MCF 10A (cell line): ENCODE measurements at regions of chr6 and their contacts with region 1.

Region 1: GRCh38 chr6:13538084-13538483 is 36.3 kb upstream of the SIRT5 start:
- DNase-seq: peak; percentile 58
- H3K4me3 Mint-ChIP-seq: no peak overlapping the region
- H3K27ac Mint-ChIP-seq: no peak overlapping the region
- H3K4me1 Mint-ChIP-seq: no peaks in the 10 kb centered on the region
- H3K27me3 Mint-ChIP-seq: no peaks in the 10 kb centered on the region
- CTCF ChIP-seq: peak; percentile 35

Region 2: DNA sequence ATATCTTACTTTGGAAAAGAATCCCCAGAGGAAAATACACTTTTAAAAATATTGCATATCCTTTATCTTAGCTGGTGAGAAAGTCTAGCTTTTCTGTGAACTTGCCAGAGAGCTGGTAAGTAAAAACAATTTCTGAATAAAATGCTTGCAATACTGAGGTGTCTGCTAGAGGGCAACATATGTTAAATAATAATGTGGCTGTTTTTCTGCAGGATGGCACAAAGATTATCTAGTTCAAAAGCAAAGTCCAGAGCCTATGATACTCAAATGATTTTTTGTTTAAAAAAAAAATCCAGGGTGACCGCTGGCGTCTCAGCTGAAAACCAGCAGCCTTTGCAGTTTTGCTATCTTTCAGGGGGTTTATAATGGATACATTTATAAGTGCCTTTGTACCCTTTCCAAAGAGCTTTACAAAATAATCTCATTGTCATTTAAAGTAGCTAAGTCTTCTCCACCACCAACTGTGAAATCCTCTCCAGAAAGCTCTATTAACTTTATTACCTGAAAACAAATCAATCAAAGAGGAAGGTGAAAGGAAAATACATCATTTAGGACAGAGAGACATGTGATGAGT is 626.6 kb before region 1 on chr6:
- CTCF ChIA-PET with region 1: interaction called, 3 read pairs
- POLR2A ChIA-PET with region 1: no interaction called
- intact Hi-C with region 1: loop called (anchors 10 kb)
- DNase-seq: peak; percentile 31
- H3K4me3 Mint-ChIP-seq: no peak overlapping the region
- H3K27ac Mint-ChIP-seq: no peak overlapping the region
- H3K4me1 Mint-ChIP-seq: no peaks in the 10 kb centered on the region
- H3K27me3 Mint-ChIP-seq: peaks cover 62% of the 10 kb centered on the region
- CTCF ChIP-seq: peak; percentile 40

Region 3: DNA sequence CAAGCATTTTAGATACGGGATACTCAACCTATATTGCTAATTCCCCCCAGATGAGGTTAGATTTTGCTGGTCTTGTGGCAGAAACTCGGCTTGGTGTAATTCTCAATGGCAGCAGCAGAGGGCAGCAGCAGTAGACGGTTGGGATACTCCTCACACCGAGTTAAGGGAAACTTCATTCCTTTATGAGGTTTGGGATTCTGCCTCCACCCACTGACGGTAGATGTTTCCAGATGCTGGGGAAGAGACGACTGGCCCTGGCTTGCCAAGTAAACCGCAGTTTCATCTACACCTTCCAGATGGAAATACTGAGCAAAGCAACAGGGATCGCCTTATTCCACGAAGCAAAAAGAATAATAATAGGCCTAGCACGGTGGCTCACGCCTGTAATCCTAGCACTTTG is 201.5 kb before region 1 on chr6:
- CTCF ChIA-PET with region 1: interaction called, 17 read pairs
- POLR2A ChIA-PET with region 1: interaction called, 5 read pairs
- intact Hi-C with region 1: loop called (anchors 1 kb)
- DNase-seq: peak; percentile 81
- H3K4me3 Mint-ChIP-seq: no peak overlapping the region
- H3K27ac Mint-ChIP-seq: no peak overlapping the region
- H3K4me1 Mint-ChIP-seq: peaks cover 5% of the 10 kb centered on the region
- H3K27me3 Mint-ChIP-seq: no peaks in the 10 kb centered on the region
- CTCF ChIP-seq: peak; percentile 90

Region 4: GRCh38 chr6:13383328-13384163 is 154.5 kb before region 1 on chr6:
- CTCF ChIA-PET with region 1: interaction called, 3 read pairs
- POLR2A ChIA-PET with region 1: no interaction called
- intact Hi-C with region 1: loop called (anchors 1 kb)
- DNase-seq: peak; percentile 55
- H3K4me3 Mint-ChIP-seq: peak overlapping the region; percentile 32
- H3K27ac Mint-ChIP-seq: peak overlapping the region; percentile 59
- H3K4me1 Mint-ChIP-seq: peaks cover 10% of the 10 kb centered on the region
- H3K27me3 Mint-ChIP-seq: no peaks in the 10 kb centered on the region
- CTCF ChIP-seq: peak; percentile 23

Region 5: GRCh38 chr6:13431861-13432465 is 106.1 kb before region 1 on chr6:
- CTCF ChIA-PET with region 1: no interaction called
- POLR2A ChIA-PET with region 1: no interaction called
- intact Hi-C with region 1: no loop called
- DNase-seq: peak; percentile 36
- H3K4me3 Mint-ChIP-seq: no peak overlapping the region
- H3K27ac Mint-ChIP-seq: peak overlapping the region; percentile 40
- H3K4me1 Mint-ChIP-seq: peaks cover 18% of the 10 kb centered on the region
- H3K27me3 Mint-ChIP-seq: no peaks in the 10 kb centered on the region
- CTCF ChIP-seq: no peak